ENCODE measurements at regions of chr5 and their contacts with region 1.

Region 1: GRCh38 chr5:55903121-55903701 is 52.1 kb downstream of the IL31RA start:
- DNase-seq: peak; percentile 94 to 97 (median 95)
- H3K4me3 ChIP-seq: peak overlapping the region in 1 of 3 experiments; percentile 59
- H3K4me3 Mint-ChIP-seq: peak overlapping the region; percentile 56 to 84
- H3K27ac ChIP-seq: peak overlapping the region; percentile 74 to 94
- H3K27ac Mint-ChIP-seq: peak overlapping the region; percentile 92 to 99 (median 96)
- H3K4me1 ChIP-seq: peaks cover 22 to 23% of the 10 kb centered on the region in 2 donors
- H3K4me1 Mint-ChIP-seq: peaks cover 24% of the 10 kb centered on the region
- H3K27me3 ChIP-seq: no peaks in the 10 kb centered on the region
- H3K27me3 Mint-ChIP-seq: no peaks in the 10 kb centered on the region
- CTCF ChIP-seq: no peak

Region 2: GRCh38 chr5:55711968-55712859 is 191.0 kb before region 1 on chr5 and contains the start of gene SLC38A9:
- intact Hi-C with region 1: loop called in 1 of 2 experiments (anchors 10 kb)
- DNase-seq: peak; percentile 87 to 94 (median 89)
- H3K4me3 ChIP-seq: peak within 1 kb of the TSS; percentile 85 to 92 (median 90)
- H3K4me3 Mint-ChIP-seq: peak within 1 kb of the TSS; percentile 99 to 100
- H3K27ac ChIP-seq: peak within 1 kb of the TSS; percentile 46 to 83
- H3K27ac Mint-ChIP-seq: peak within 1 kb of the TSS; percentile 90 to 98 (median 93)
- H3K4me1 ChIP-seq: peaks cover 12 to 18% of the 10 kb centered on the region in 2 donors
- H3K4me1 Mint-ChIP-seq: peaks cover 13% of the 10 kb centered on the region
- H3K27me3 ChIP-seq: no peaks in the 10 kb centered on the region
- H3K27me3 Mint-ChIP-seq: peaks cover 0 to 4% (median 1%) of the 10 kb centered on the region in 3 donors
- CTCF ChIP-seq: no peak
- polyA plus RNA-seq, gene SLC38A9: 10.7 to 15.2 (median 14.1) TPM

Region 3: DNA sequence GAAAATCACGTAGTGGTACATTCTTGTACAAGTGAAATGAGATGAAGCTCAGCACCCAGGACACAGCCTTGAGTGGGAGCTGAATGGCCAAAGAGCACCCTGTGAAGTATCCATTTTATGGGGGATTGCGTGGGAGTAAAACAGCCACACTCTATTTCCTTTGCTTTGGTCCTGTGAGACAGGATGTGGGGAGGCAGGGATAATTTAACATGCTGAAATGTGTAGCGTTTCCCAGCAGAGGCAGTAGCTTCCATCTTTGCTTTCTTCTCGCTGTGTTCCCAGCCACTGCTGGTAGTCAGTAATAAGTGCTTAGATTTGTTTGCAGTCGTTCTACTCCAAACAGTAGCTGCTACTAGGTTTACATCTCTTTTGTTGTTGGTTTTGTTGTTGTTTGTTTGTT is 47.7 kb before region 1 on chr5:
- intact Hi-C with region 1: loop called (anchors 5 kb)
- DNase-seq: no peak
- H3K4me3 ChIP-seq: peak overlapping the region in 1 of 3 experiments; percentile 47
- H3K4me3 Mint-ChIP-seq: peak overlapping the region; percentile 36 to 60
- H3K27ac ChIP-seq: peak overlapping the region in 1 of 2 donors; percentile 81
- H3K27ac Mint-ChIP-seq: peak overlapping the region; percentile 86 to 97 (median 93)
- H3K4me1 ChIP-seq: peaks cover 84 to 95% of the 10 kb centered on the region in 2 donors
- H3K4me1 Mint-ChIP-seq: peaks cover 85% of the 10 kb centered on the region
- H3K27me3 ChIP-seq: no peaks in the 10 kb centered on the region
- H3K27me3 Mint-ChIP-seq: no peaks in the 10 kb centered on the region
- CTCF ChIP-seq: no peak

Region 4: GRCh38 chr5:55864606-55865541 is 38.3 kb before region 1 on chr5:
- intact Hi-C with region 1: loop called in 1 of 2 experiments (anchors 5 kb)
- DNase-seq: peak; percentile 67 to 72 (median 68)
- H3K4me3 ChIP-seq: peak overlapping the region in 1 of 3 experiments; percentile 16
- H3K4me3 Mint-ChIP-seq: no peak overlapping the region
- H3K27ac ChIP-seq: peak overlapping the region; percentile 39 to 76
- H3K27ac Mint-ChIP-seq: no peak overlapping the region
- H3K4me1 ChIP-seq: peaks cover 31 to 48% of the 10 kb centered on the region in 2 donors
- H3K4me1 Mint-ChIP-seq: peaks cover 23% of the 10 kb centered on the region
- H3K27me3 ChIP-seq: no peaks in the 10 kb centered on the region
- H3K27me3 Mint-ChIP-seq: peaks cover 0 to 2% (median 0%) of the 10 kb centered on the region in 3 donors
- CTCF ChIP-seq: no peak

Measured in CD14-positive monocyte (primary cell).